ENCODE measurements at regions of chr14 and their contacts with region 1.

Region 1: GRCh38 chr14:60064491-60065072 is 27.1 kb upstream of the PCNX4 start:
- DNase-seq: no peak
- H3K4me3 ChIP-seq: peak overlapping the region in 1 of 59 donors; percentile 3
- H3K27ac ChIP-seq: no peak overlapping the region
- H3K27me3 ChIP-seq: no peaks in the 10 kb centered on the region
- CTCF ChIP-seq: peak; percentile 36 to 89 (median 68)

Region 2: GRCh38 chr14:60184146-60184904 is 119.7 kb after region 1 on chr14:
- intact Hi-C with region 1: loop called in 1 of 2 experiments (anchors 2 kb)
- DNase-seq: no peak
- H3K4me3 ChIP-seq: peak overlapping the region; percentile 20 to 71 (median 54)
- H3K27ac ChIP-seq: peak overlapping the region in 37 of 59 donors; percentile 3 to 77 (median 42)
- H3K27me3 ChIP-seq: no peaks in the 10 kb centered on the region
- CTCF ChIP-seq: peak; percentile 69 to 98 (median 88)

Region 3: DNA sequence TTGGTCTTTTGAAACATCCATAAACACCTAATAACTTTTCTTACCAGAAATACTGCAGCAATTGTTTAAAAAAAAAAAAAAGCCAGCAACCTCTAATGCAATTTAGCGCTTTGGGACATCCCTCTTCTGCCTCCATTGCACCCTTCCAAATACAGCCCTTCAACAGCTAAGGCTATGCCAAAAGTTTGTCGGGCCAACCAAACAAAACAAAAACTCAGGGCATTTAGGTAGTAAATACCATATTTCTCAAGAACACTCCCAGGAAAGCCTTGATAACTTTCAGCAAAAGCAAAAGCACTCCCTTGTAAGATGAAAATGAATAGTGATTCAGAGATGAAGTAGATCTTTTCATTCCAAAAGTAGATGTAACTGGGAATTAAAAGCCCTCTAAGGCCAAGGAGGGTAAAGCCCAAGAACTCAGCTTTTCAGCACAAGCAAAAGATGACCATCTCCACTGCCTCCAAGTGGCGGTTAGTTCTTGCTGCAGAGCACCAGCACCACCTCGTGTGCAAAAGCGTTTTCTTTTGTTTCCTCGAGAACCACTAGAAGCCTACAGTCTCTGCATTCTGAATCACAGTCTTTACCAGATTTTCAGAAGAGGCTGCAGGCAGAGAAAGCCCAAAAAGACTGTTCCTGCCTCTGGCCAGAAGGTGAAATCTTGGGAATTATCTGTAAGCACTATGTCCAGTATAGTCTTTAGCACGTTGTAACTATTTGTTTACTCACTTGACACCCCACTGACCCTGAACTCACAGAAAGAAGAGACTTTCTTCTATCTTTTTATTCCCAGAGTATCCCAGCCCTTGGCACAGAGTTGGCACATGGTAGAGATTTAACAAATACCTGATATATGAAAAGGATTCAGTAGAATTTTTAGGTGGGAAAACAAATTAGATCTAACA is 497.5 kb after region 1 on chr14:
- intact Hi-C with region 1: loop called in 1 of 2 experiments (anchors 10 kb)
- DNase-seq: peak in 8 of 10 donors; percentile 6 to 65 (median 50)
- H3K4me3 ChIP-seq: no peak overlapping the region
- H3K27ac ChIP-seq: no peak overlapping the region
- H3K27me3 ChIP-seq: peaks cover 0 to 6% (median 0%) of the 10 kb centered on the region in 45 donors
- CTCF ChIP-seq: peak; percentile 14 to 76 (median 64)

Region 4: DNA sequence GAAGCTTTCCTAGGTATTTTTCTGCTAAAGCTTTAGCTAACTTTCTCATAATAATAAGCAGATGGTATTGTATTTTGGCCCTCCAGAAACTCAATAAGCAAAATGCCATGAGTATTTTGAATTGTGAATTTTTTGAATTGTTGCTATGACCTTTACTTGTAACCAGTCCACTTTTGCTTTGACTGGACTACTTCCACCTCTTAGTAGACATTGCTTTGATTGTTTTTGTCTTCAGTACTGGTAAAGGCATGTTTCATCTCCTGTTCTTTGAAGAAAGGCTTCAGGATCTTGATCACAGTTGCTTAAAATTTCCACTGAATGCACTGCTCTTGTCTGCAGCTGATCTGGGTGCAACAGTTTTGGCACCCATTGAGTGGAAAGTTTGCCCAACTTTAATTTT is 814.0 kb after region 1 on chr14:
- intact Hi-C with region 1: no loop called
- DNase-seq: no peak
- H3K4me3 ChIP-seq: no peak overlapping the region
- H3K27ac ChIP-seq: no peak overlapping the region
- H3K27me3 ChIP-seq: no peaks in the 10 kb centered on the region
- CTCF ChIP-seq: no peak